Esophagus muscularis mucosa (tissue), 4 donors: ENCODE measurements at regions of chr7 and their contacts with region 1.

Region 1: DNA sequence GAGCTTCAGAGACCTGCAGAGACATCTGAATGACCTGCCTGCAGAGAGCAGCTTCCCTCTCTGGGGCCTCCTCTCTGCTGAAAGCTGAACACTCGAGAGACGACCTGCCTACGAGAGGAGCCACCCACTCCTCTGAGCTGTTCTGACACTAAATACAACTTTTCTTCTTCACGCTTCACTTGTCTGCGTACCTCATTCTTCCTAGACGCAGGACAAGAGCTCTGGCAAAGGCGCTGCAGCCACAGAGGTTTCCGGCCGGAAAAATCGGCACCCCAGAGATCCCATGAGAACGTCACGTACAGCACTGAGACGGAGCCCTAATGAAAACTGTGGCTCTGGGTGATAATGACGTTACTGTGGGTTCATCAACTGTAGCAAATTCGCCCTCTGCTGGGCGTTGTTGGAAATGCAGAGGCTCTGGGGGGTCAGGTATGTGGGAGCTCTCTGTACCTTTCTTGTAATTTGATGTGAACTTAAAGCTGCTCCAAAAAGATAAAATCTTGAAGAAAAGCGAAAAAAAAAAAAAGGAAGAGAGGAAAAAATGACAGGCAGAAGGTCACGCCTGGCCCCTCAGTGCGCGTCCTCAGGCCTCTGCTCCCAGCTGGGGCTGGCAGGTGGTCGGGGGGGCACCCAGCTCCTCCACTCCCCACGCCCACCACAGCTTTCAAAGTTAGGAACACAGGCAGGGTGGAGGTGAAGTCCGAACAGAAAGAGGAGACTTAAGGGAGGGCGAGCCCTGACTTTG is 120.7 kb downstream of the DYNC2I1 start:
- DNase-seq: peak; percentile 96
- H3K4me3 ChIP-seq: peak overlapping the region; percentile 39 to 56 (median 50)
- H3K27ac ChIP-seq: peak overlapping the region; percentile 35 to 59 (median 48)
- H3K4me1 ChIP-seq: peaks cover 8 to 24% (median 18%) of the 10 kb centered on the region in 4 donors
- H3K27me3 ChIP-seq: no peaks in the 10 kb centered on the region
- CTCF ChIP-seq: peak; percentile 93 to 96 (median 93)
- EP300 ChIP-seq: no peak
- POLR2A ChIP-seq: no peak

Region 2: DNA sequence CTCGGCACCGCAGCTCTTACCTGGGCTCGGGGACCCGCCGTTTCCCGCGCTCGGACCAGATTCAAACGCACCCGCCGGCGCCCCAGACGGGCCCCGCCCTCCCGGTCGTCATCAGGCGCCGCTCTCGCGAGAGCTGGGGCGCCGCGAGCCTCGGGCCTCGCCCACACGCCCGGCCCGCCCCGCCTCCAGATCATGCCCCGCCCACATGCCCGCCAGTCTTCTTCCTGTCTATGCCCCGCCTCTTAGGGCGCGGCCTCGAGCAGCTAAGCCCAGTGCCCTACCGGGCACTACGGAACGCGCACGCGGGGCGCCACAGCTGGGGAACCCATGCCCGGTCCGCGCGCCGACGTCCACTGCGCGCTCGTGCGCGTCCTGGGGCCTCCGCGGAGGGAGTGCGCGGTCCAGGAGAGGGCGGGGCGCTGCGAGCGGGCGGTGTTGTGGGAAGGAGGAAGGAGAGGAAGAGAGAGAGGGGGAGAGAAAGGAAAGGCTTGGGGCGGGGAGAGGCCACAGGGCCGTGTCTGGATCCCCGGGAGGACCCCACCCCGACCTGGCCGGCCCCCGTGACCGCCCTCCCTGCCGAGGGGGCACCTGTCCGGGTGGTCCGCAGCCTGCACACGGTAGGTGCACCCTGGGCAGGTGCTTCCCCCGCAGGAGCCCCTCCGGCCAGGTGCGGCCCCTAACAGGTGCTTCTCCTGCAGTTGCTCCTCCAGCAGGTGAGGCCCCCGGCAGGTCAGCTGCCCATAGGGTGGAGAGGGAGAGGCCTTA is 272.1 kb before region 1 on chr7 and contains the start of gene NCAPG2:
- intact Hi-C with region 1: loop called (anchors 2 kb)
- DNase-seq: peak; percentile 99
- H3K4me3 ChIP-seq: peak within 1 kb of the TSS; percentile 75 to 92 (median 84)
- H3K27ac ChIP-seq: peak within 1 kb of the TSS; percentile 87 to 89 (median 88)
- H3K4me1 ChIP-seq: peaks cover 7 to 23% (median 21%) of the 10 kb centered on the region in 4 donors
- H3K27me3 ChIP-seq: no peaks in the 10 kb centered on the region
- CTCF ChIP-seq: peak; percentile 30 to 52 (median 49)
- EP300 ChIP-seq: no peak
- POLR2A ChIP-seq: peak; percentile 82
- total RNA-seq, gene NCAPG2: 4.2 to 6.2 (median 4.4) TPM

Region 3: GRCh38 chr7:158829342-158830210 is 147.4 kb before region 1 on chr7 and contains the start of gene ESYT2:
- intact Hi-C with region 1: loop called (anchors 10 kb)
- DNase-seq: peak; percentile 99
- H3K4me3 ChIP-seq: peak within 1 kb of the TSS; percentile 95 to 98 (median 97)
- H3K27ac ChIP-seq: peak within 1 kb of the TSS; percentile 99 to 100 (median 100)
- H3K4me1 ChIP-seq: peaks cover 26 to 41% (median 39%) of the 10 kb centered on the region in 4 donors
- H3K27me3 ChIP-seq: no peaks in the 10 kb centered on the region
- CTCF ChIP-seq: peak in 2 of 3 experiments; percentile 24 to 34
- EP300 ChIP-seq: peak; percentile 96
- POLR2A ChIP-seq: peak; percentile 95
- total RNA-seq, gene ESYT2: 166 to 235 (median 202) TPM